PC-9 (cell line): ENCODE measurements at regions of chr20 and their contacts with region 1.

Region 1: GRCh38 chr20:3820048-3820900 is at the start of gene AP5S1:
- DNase-seq: peak; percentile 86 to 95
- H3K4me3 ChIP-seq: peak within 1 kb of the TSS; percentile 66
- H3K27ac ChIP-seq: peak within 1 kb of the TSS; percentile 85
- H3K4me1 ChIP-seq: peaks cover 6% of the 10 kb centered on the region; the same call in 1 of the 2 replicates
- H3K27me3 ChIP-seq: no peaks in the 10 kb centered on the region
- CTCF ChIP-seq: peak; percentile 96
- total RNA-seq, gene AP5S1: 18.3 and 20.0 TPM in 2 replicates

Region 2: DNA sequence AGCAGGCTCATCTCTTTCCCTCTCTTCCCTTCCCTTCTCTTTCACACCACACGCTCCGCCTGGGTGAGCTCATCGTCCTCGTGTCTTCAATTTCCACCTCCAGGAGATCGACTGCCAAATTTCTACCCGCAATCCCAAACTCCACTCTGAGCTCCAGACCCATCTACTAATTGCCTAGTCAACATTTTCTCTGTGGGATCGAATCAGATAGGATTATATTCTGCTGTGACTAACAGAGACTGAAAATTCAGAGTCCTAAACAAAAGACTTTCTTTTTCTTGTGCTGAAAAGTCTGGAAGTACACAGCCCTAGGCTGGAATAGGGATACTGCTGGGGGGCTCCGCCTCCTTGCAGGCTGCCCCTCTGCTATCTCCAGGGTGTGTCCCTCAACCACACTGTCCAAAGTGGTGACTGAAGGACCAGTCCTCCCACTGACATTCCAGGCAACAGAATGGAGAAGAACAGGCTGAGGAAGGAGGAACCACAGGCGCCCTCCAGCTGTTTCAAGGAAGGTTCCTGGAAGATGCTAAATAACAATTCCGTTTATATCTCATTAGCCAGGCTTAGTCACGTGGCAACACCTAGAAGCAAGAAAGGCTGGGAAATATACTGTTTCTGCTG is 92.8 kb before region 1 on chr20:
- CTCF ChIA-PET with region 1: no interaction called
- POLR2A ChIA-PET with region 1: interaction called, 10 read pairs
- intact Hi-C with region 1: no loop called
- DNase-seq: peak in 1 of 2 experiments; percentile 37
- H3K4me3 ChIP-seq: no peak overlapping the region
- H3K27ac ChIP-seq: no peak overlapping the region
- H3K4me1 ChIP-seq: peaks cover 13% of the 10 kb centered on the region
- H3K27me3 ChIP-seq: 0 out of 2 replicates have a peak, but pooled peaks cover 5% of the 10 kb centered on the region
- CTCF ChIP-seq: no peak

Region 3: DNA sequence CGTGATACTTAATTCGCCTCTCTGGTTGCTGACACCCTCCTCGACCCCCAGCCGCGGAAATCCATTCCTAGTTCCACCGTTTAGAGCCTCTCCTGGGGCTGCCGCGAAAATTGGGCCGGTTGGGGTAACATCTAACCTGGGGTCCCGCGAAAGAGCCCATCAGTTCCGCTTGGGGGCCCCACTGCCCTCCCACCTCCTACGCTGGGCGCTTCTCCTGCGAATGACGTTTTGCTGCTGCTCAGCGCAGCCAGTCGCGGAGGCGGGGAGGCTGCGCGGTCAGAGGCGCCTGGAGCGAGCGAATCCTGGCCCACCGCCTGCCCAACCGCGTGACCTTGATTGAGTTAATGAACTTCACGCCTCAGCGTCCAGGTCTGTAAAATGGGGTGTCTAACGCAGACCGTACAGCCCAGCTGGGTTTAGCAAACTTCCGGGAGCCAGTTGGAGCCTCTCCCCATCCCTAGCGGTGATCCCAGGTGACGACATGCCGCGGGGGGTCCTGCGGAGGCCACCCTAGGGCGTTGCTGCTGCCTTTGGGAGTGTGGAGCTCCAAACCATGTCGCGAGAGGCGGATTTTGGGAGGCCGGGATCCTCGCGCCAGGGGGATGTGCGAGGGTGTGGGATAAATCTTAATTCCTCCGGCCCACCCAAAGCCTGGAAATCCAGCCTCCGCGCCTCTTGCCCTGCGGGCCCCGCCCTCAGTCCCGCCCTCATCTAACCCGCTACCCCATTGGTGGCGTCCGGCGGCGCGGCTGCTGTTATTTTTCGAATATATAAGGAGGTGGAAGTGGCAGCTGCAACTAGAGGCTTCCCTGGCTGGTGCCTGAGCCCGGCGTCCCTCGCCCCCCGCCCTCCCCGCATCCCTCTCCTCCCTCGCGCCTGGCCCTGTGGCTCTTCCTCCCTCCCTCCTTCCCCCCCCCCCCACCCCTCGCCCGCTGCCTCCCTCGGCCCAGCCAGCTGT is 24.5 kb before region 1 on chr20 and contains the start of gene CDC25B:
- CTCF ChIA-PET with region 1: no interaction called
- POLR2A ChIA-PET with region 1: no interaction called
- intact Hi-C with region 1: loop called (anchors 1 kb)
- DNase-seq: peak; percentile 75 to 91
- H3K4me3 ChIP-seq: peak within 1 kb of the TSS; percentile 95
- H3K27ac ChIP-seq: peak within 1 kb of the TSS; percentile 35; the same call in 1 of the 2 replicates
- H3K4me1 ChIP-seq: peaks cover 15% of the 10 kb centered on the region
- H3K27me3 ChIP-seq: no peaks in the 10 kb centered on the region
- CTCF ChIP-seq: peak; percentile 54; the same call in 1 of the 2 replicates
- total RNA-seq, gene CDC25B: 83.5 and 91.0 TPM in 2 replicates

Region 4: GRCh38 chr20:3846740-3847428 is 26.6 kb after region 1 on chr20 and contains the start of gene MAVS:
- CTCF ChIA-PET with region 1: interaction called, 8 read pairs
- POLR2A ChIA-PET with region 1: no interaction called
- intact Hi-C with region 1: loop called (anchors 1 kb)
- DNase-seq: peak; percentile 66 to 91
- H3K4me3 ChIP-seq: peak within 1 kb of the TSS; percentile 100
- H3K27ac ChIP-seq: peak within 1 kb of the TSS; percentile 88
- H3K4me1 ChIP-seq: peaks cover 54% of the 10 kb centered on the region
- H3K27me3 ChIP-seq: no peaks in the 10 kb centered on the region
- CTCF ChIP-seq: no peak
- total RNA-seq, gene MAVS: 53.6 and 61.3 TPM in 2 replicates

Region 5: DNA sequence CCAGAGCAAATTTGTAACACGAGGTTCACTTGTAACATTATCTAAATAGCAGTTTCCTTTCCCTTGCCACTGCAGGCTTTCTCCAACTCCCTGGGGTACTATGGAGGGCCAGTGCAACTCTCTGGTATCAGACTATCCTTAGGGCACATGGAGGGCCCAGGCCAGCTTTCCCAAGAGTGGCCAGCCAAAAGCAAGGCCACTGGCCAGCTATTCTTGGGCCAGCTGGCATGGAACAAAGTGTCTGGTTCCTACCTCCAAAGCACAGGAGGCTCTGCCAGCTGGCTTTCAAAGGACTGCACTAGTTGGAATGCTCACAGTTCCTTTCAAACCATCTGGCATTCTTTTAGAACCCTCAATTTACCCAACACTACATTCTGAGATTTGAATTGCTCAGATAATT is 186.4 kb after region 1 on chr20:
- CTCF ChIA-PET with region 1: no interaction called
- POLR2A ChIA-PET with region 1: no interaction called
- intact Hi-C with region 1: no loop called
- DNase-seq: no peak
- H3K4me3 ChIP-seq: no peak overlapping the region
- H3K27ac ChIP-seq: no peak overlapping the region
- H3K4me1 ChIP-seq: peaks cover 1% of the 10 kb centered on the region
- H3K27me3 ChIP-seq: no peaks in the 10 kb centered on the region
- CTCF ChIP-seq: no peak